Activated CD4-positive, alpha-beta T cell treated with anti-CD3 and anti-CD28 coated beads, Interleukin-2, amount 10 ng/mL, durations not matched to agents 7 days and 5 days (primary cell): ENCODE measurements at regions of chr4 and their contacts with region 1.

Region 1: DNA sequence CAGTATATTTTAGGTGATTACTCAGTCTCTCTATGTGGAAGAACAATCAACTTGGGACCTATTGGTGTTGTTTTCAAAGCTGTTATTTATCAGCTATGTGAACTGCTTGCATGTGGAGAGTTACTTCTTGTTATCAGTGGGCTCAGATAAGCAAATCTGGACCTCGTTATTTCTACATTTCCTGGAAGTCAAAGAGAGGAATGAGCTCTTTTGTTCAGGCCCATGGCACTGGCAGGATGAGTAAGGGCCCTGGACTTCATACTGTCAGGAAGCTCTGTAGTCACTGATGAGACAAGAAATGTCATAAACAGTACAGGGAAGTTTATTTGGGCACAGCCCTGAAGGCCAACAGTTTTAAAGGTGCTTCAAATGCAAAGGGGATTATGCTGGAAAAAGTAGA is 760.6 kb upstream of the EPHA5 start:
- DNase-seq: no peak
- H3K4me3 Mint-ChIP-seq: no peak overlapping the region
- H3K27ac Mint-ChIP-seq: no peak overlapping the region
- H3K4me1 Mint-ChIP-seq: no peaks in the 10 kb centered on the region
- H3K27me3 Mint-ChIP-seq: no peaks in the 10 kb centered on the region

Region 2: GRCh38 chr4:66416425-66416824 is 14.4 kb before region 1 on chr4:
- CTCF ChIA-PET with region 1: interaction called, 10 read pairs
- POLR2A ChIA-PET with region 1: no interaction called
- DNase-seq: no peak
- H3K4me3 Mint-ChIP-seq: no peak overlapping the region
- H3K27ac Mint-ChIP-seq: no peak overlapping the region
- H3K4me1 Mint-ChIP-seq: no peaks in the 10 kb centered on the region
- H3K27me3 Mint-ChIP-seq: no peaks in the 10 kb centered on the region

Region 3: GRCh38 chr4:66736606-66737005 is 305.8 kb after region 1 on chr4:
- CTCF ChIA-PET with region 1: no interaction called
- POLR2A ChIA-PET with region 1: no interaction called
- DNase-seq: no peak
- H3K4me3 Mint-ChIP-seq: no peak overlapping the region
- H3K27ac Mint-ChIP-seq: no peak overlapping the region
- H3K4me1 Mint-ChIP-seq: no peaks in the 10 kb centered on the region
- H3K27me3 Mint-ChIP-seq: no peaks in the 10 kb centered on the region